ENCODE measurements at regions of chr14 and their contacts with region 1.

Region 1: GRCh38 chr14:52003324-52003723 is 14.0 kb downstream of the RTRAF start:
- DNase-seq: no peak

Region 2: GRCh38 chr14:52111563-52111962 is 108.2 kb after region 1 on chr14:
- intact Hi-C with region 1: loop called in 1 of 2 experiments (anchors 10 kb)
- DNase-seq: no peak